Dendritic cell treated with granulocyte-macrophage colony-stimulating factor and Interleukin-4, amounts not matched to agents 40 ng/mL and 50 ng/mL, for 4 days (primary cell): ENCODE measurements at regions of chr13 and their contacts with region 1.

Region 1: DNA sequence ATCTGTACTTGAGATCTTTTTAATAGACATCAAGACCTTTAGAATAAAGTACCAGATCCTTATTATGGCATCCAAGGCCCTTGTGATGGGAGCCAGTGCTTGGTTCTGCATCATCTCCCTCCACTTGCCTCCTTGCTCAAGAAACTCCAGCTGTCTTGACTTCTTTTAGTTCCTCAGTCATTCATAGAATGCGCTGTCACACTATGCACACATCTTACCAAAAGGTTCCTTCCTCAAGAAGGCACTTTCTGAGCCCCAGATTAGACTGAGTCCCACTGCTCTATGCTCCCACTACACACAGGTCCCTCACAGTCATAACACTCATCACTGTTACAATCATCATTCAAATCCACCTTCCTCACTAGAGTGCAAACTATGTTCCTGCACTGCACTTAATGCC is 57.8 kb upstream of the ITM2B start:
- H3K4me3 Mint-ChIP-seq: peak overlapping the region; percentile 27
- H3K27ac Mint-ChIP-seq: peak overlapping the region; percentile 89
- H3K4me1 Mint-ChIP-seq: peaks cover 48% of the 10 kb centered on the region
- H3K27me3 Mint-ChIP-seq: no peaks in the 10 kb centered on the region

Region 2: DNA sequence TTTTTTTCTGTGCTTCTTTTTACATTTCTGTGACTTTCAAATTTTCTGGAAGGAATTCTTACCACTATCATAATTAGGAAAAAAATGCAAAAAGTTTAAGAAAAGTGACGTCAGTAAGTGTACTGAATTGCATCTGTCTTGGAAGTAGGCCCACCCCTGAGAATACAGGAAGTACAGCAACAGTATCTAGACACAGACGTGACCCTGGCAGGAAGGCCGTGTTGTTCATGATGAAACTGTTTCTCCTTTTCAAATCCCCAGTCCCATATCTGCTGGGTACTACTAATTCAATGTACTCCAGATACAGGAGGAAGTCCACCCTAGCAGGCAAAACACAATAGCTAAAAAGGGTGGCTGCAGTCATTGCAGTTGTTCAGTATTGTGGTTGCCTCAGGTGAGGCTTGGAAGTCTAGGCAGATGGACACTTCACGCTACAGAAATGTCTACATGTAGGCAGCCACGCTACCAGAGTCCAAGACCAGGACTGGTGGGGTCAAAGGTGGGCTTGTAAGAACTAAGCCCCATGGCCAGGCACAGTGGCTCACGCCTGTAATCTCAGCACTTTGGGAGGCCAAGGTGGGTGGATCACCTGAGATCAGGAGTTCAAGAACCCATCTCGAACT is 30.7 kb before region 1 on chr13:
- intact Hi-C with region 1: loop called (anchors 5 kb)
- H3K4me3 Mint-ChIP-seq: no peak overlapping the region
- H3K27ac Mint-ChIP-seq: peak overlapping the region; percentile 71
- H3K4me1 Mint-ChIP-seq: peaks cover 62% of the 10 kb centered on the region
- H3K27me3 Mint-ChIP-seq: peaks cover 2% of the 10 kb centered on the region